ENCODE measurements at regions of chr1 and their contacts with region 1.

Region 1: DNA sequence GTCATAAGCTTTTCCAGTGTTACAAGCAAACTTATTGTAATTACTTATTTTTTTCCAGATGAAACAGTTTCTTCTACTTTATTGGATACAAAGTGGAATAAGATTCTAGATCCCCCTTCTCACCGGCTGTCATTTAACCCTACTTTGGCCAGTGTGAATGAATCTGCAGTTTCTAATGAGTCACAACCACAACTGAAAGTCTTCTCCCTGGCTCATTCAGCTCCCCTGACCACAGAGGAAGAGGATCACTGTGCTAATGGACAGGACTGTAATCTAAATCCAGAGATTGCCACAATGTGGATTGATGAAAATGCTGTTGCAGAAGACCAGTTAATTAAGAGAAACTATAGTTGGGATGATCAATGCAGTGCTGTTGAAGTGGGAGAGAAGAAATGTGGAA is 95.5 kb downstream of the ZFYVE9 start:
- DNase-seq: peak; percentile 86
- ATAC-seq: peak; percentile 70
- H3K4me3 ChIP-seq: no peak overlapping the region
- H3K27ac ChIP-seq: no peak overlapping the region
- H3K4me1 ChIP-seq: peaks cover 12% of the 10 kb centered on the region
- H3K27me3 ChIP-seq: no peaks in the 10 kb centered on the region
- CTCF ChIP-seq: no peak
- POLR2A ChIP-seq: no peak
- RAD21 ChIP-seq: no peak

Region 2: DNA sequence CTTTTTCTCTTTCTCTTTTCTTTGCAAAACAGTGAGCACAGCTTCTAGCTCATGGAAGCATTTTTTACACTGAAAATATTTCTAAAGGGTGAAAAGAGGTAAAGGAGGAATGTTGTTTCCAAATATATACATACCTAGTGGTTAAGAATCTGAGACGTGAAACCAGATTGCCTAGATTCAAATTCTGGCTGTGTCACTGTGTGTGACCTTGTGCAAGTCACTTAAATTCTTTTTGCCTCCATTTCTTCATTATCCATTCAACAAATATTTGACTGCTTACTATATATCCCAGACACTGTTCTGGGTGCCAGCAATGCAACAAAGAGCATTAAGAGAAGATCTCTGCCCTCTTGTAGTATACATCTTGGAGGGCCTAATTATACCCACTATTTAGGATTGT is 42.3 kb before region 1 on chr1:
- CTCF ChIA-PET with region 1: no interaction called
- POLR2A ChIA-PET with region 1: no interaction called
- dilution Hi-C with region 1: no loop called
- in situ Hi-C with region 1: no loop called
- intact Hi-C with region 1: loop called (anchors 2 kb)
- DNase-seq: peak; percentile 82
- ATAC-seq: peak; percentile 81
- H3K4me3 ChIP-seq: no peak overlapping the region
- H3K27ac ChIP-seq: no peak overlapping the region
- H3K4me1 ChIP-seq: peaks cover 2% of the 10 kb centered on the region; the same call in 1 of the 2 replicates
- H3K27me3 ChIP-seq: no peaks in the 10 kb centered on the region
- CTCF ChIP-seq: no peak
- POLR2A ChIP-seq: no peak
- RAD21 ChIP-seq: no peak

Region 3: GRCh38 chr1:52253401-52253800 is 16.0 kb after region 1 on chr1:
- CTCF ChIA-PET with region 1: no interaction called
- POLR2A ChIA-PET with region 1: interaction called, 14 read pairs
- dilution Hi-C with region 1: no loop called
- in situ Hi-C with region 1: no loop called
- intact Hi-C with region 1: no loop called
- DNase-seq: no peak
- ATAC-seq: no peak
- H3K4me3 ChIP-seq: no peak overlapping the region
- H3K27ac ChIP-seq: no peak overlapping the region
- H3K4me1 ChIP-seq: no peaks in the 10 kb centered on the region
- H3K27me3 ChIP-seq: no peaks in the 10 kb centered on the region
- CTCF ChIP-seq: no peak
- POLR2A ChIP-seq: no peak
- RAD21 ChIP-seq: no peak

Region 4: DNA sequence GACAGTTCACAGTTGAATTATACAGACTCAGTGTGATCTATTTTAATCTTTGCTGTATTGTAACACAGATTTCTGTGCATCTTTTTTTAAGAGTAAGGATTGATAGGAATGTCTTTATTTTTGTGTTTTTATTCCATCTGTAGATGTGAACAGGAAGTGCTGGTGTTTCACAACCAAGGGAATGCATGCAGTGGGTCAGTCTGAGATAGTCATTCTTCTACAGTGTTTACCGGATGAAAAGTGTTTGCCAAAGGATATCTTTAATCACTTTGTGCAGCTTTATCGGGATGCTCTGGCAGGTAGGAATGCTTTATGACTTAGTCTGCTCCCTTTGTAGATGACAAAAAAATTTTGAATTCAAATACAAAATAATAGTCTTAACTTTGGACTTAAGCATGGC is 44.1 kb after region 1 on chr1:
- CTCF ChIA-PET with region 1: no interaction called
- POLR2A ChIA-PET with region 1: no interaction called
- dilution Hi-C with region 1: no loop called
- in situ Hi-C with region 1: no loop called
- intact Hi-C with region 1: loop called (anchors 5 kb)
- DNase-seq: peak; percentile 82
- ATAC-seq: peak; percentile 99
- H3K4me3 ChIP-seq: no peak overlapping the region
- H3K27ac ChIP-seq: no peak overlapping the region
- H3K4me1 ChIP-seq: no peaks in the 10 kb centered on the region
- H3K27me3 ChIP-seq: no peaks in the 10 kb centered on the region
- CTCF ChIP-seq: no peak
- POLR2A ChIP-seq: no peak
- RAD21 ChIP-seq: no peak